Kidney (tissue), 22 donors: ENCODE measurements at regions of chr20 and their contacts with region 1.

Region 1: GRCh38 chr20:22684072-22684762 is 99.8 kb upstream of the FOXA2 start:
- DNase-seq: peak in 4 of 5 donors; percentile 79 to 91 (median 83)
- H3K4me3 ChIP-seq: no peak overlapping the region
- H3K27ac ChIP-seq: no peak overlapping the region
- H3K4me1 ChIP-seq: no peaks in the 10 kb centered on the region
- H3K27me3 ChIP-seq: no peaks in the 10 kb centered on the region
- CTCF ChIP-seq: peak; percentile 78

Region 2: GRCh38 chr20:22339091-22339881 is 344.9 kb before region 1 on chr20:
- intact Hi-C with region 1: loop called (anchors 5 kb)
- DNase-seq: peak in 3 of 5 donors; percentile 55 to 85 (median 80)
- H3K4me3 ChIP-seq: no peak overlapping the region
- H3K27ac ChIP-seq: no peak overlapping the region
- H3K4me1 ChIP-seq: no peaks in the 10 kb centered on the region
- H3K27me3 ChIP-seq: no peaks in the 10 kb centered on the region
- CTCF ChIP-seq: peak; percentile 82